ENCODE measurements at regions of chr11 and their contacts with region 1.

Region 1: GRCh38 chr11:33168709-33169200 is 7.5 kb upstream of the CSTF3 start:
- DNase-seq: no peak
- ATAC-seq: no peak
- H3K4me3 ChIP-seq: no peak overlapping the region
- H3K27ac ChIP-seq: no peak overlapping the region
- H3K4me1 ChIP-seq: no peaks in the 10 kb centered on the region; a peak in 1 of 4 replicates
- H3K27me3 ChIP-seq: no peaks in the 10 kb centered on the region
- CTCF ChIP-seq: no peak
- POLR2A ChIP-seq: no peak
- RAD21 ChIP-seq: no peak

Region 2: GRCh38 chr11:33344611-33345010 is 175.9 kb after region 1 on chr11:
- CTCF ChIA-PET with region 1: no interaction called
- POLR2A ChIA-PET with region 1: no interaction called
- RAD21 ChIA-PET with region 1: no interaction called
- intact Hi-C with region 1: loop called (anchors 5 kb)
- DNase-seq: no peak
- ATAC-seq: no peak; the same call in 1 of the 2 replicates
- H3K4me3 ChIP-seq: no peak overlapping the region
- H3K27ac ChIP-seq: no peak overlapping the region
- H3K4me1 ChIP-seq: no peaks in the 10 kb centered on the region
- H3K27me3 ChIP-seq: no peaks in the 10 kb centered on the region
- CTCF ChIP-seq: no peak
- POLR2A ChIP-seq: no peak
- RAD21 ChIP-seq: peak; percentile 40; the same call in 1 of the 2 replicates

Measured in HCT116 (cell line).